WTC11 (cell line): ENCODE measurements at regions of chr1 and their contacts with region 1.

Region 1: DNA sequence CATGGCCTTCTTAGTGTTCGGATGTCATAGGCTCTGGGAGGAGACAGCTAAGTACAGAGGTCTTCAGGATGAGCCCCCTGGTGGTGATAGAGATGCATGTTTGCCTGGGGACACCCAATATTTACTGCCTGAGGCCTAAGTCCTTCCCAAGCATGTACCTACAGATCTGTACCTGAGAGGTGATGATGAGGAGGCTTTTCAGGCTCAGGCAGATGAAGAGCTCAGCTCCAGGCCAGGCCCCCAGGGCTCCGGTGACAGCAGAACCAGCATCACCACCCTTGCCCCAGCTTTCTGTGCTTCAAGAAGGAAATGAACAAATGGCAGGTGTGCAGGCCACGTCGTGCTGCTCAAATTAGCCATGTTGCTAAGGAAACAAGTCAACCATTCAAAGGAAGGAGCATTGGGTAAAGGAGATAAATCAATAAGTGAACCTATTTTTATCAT is 21.1 kb downstream of the CACNA1E start:
- DNase-seq: peak; percentile 52
- ATAC-seq: peak; percentile 98
- H3K4me3 Mint-ChIP-seq: no peak overlapping the region
- H3K27ac Mint-ChIP-seq: no peak overlapping the region
- H3K4me1 Mint-ChIP-seq: peaks cover 7% of the 10 kb centered on the region; the same call in 1 of the 2 replicates
- H3K27me3 Mint-ChIP-seq: no peaks in the 10 kb centered on the region; the same call in none of the 2 replicates
- CTCF ChIP-seq: peak; percentile 64

Region 2: GRCh38 chr1:181479137-181479745 is 25.2 kb before region 1 on chr1:
- CTCF ChIA-PET with region 1: interaction called, 15 read pairs
- POLR2A ChIA-PET with region 1: no interaction called
- DNase-seq: peak; percentile 56
- ATAC-seq: peak; percentile 66
- H3K4me3 Mint-ChIP-seq: no peak overlapping the region
- H3K27ac Mint-ChIP-seq: no peak overlapping the region
- H3K4me1 Mint-ChIP-seq: peaks cover 21% of the 10 kb centered on the region
- H3K27me3 Mint-ChIP-seq: peaks cover 47% of the 10 kb centered on the region
- CTCF ChIP-seq: peak; percentile 55

Region 3: GRCh38 chr1:181493166-181493565 is 11.3 kb before region 1 on chr1:
- CTCF ChIA-PET with region 1: interaction called, 13 read pairs
- POLR2A ChIA-PET with region 1: no interaction called
- DNase-seq: no peak
- ATAC-seq: no peak
- H3K4me3 Mint-ChIP-seq: no peak overlapping the region
- H3K27ac Mint-ChIP-seq: no peak overlapping the region
- H3K4me1 Mint-ChIP-seq: no peaks in the 10 kb centered on the region
- H3K27me3 Mint-ChIP-seq: peaks cover 13% of the 10 kb centered on the region
- CTCF ChIP-seq: no peak